ENCODE measurements at regions of chrX and their contacts with region 1.

Region 1: GRCh38 chrX:118254611-118255010 is 91.3 kb upstream of the WDR44 start:
- DNase-seq: peak; percentile 39
- ATAC-seq: no peak
- H3K4me3 ChIP-seq: no peak overlapping the region
- H3K27ac ChIP-seq: no peak overlapping the region
- H3K4me1 ChIP-seq: no peaks in the 10 kb centered on the region
- H3K27me3 ChIP-seq: no peaks in the 10 kb centered on the region
- CTCF ChIP-seq: peak; percentile 73; the same call in 1 of the 2 replicates

Region 2: GRCh38 chrX:116490104-116490503 is 1764.5 kb before region 1 on chrX:
- CTCF ChIA-PET with region 1: no interaction called
- POLR2A ChIA-PET with region 1: no interaction called
- in situ Hi-C with region 1: no loop called
- intact Hi-C with region 1: loop called (anchors 10 kb)
- DNase-seq: no peak
- ATAC-seq: no peak
- H3K4me3 ChIP-seq: no peak overlapping the region
- H3K27ac ChIP-seq: no peak overlapping the region
- H3K4me1 ChIP-seq: no peaks in the 10 kb centered on the region
- H3K27me3 ChIP-seq: no peaks in the 10 kb centered on the region
- CTCF ChIP-seq: peak; percentile 30; the same call in 1 of the 2 replicates

Region 3: GRCh38 chrX:117713411-117713810 is 541.2 kb before region 1 on chrX:
- CTCF ChIA-PET with region 1: no interaction called
- POLR2A ChIA-PET with region 1: interaction called, 12 read pairs
- in situ Hi-C with region 1: no loop called
- intact Hi-C with region 1: no loop called
- DNase-seq: no peak
- ATAC-seq: no peak
- H3K4me3 ChIP-seq: no peak overlapping the region
- H3K27ac ChIP-seq: no peak overlapping the region
- H3K4me1 ChIP-seq: no peaks in the 10 kb centered on the region
- H3K27me3 ChIP-seq: no peaks in the 10 kb centered on the region
- CTCF ChIP-seq: no peak

Region 4: DNA sequence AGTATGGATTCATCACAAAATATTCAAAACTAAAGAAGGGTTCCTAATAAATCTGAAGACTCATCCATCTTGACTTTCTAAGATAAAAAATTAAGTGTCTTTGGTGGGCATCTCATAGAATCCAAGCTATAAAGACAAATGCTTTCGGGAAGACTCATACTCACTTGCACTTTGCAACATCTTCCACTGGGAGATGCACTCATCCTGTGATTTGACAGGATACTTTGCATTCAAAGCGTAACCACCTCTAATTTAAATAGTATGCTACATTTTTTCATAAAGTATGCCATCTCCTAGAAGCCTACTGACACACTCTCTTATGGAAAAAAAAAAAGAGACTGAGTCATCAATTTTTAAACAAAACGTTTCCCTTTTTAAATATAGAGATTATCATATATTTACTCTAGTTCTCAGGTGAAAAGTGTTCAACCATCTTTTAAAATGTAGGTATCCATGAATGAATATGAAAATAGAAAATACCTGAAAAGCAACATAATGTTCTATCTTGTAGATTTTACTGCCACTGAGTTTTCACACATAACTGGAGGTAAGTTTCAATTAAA is 257.6 kb before region 1 on chrX:
- CTCF ChIA-PET with region 1: no interaction called
- POLR2A ChIA-PET with region 1: interaction called, 4 read pairs
- in situ Hi-C with region 1: no loop called
- intact Hi-C with region 1: loop called (anchors 10 kb)
- DNase-seq: no peak
- ATAC-seq: no peak
- H3K4me3 ChIP-seq: no peak overlapping the region
- H3K27ac ChIP-seq: no peak overlapping the region
- H3K4me1 ChIP-seq: no peaks in the 10 kb centered on the region
- H3K27me3 ChIP-seq: no peaks in the 10 kb centered on the region
- CTCF ChIP-seq: peak; percentile 58; the same call in 1 of the 2 replicates

Region 5: DNA sequence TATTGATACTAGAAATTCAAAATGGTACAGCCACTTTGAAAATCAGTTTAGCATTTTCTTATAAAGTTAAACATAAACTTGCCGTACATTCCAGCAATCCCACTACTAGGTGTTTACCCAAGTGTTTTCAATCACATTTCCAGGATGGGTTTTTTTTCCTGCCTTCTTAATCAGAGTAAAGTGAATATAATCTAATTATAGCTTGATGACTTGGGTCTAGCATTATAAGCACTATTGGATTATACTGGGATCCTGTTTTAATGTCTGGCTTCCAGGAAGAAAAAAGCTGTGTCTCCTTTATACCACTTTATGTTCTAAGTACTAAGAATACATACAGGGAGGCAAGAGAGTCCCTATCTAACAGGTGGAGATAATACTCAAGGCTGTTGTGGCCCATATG is 34.7 kb before region 1 on chrX:
- CTCF ChIA-PET with region 1: no interaction called
- POLR2A ChIA-PET with region 1: no interaction called
- in situ Hi-C with region 1: no loop called
- intact Hi-C with region 1: no loop called
- DNase-seq: no peak
- ATAC-seq: no peak
- H3K4me3 ChIP-seq: no peak overlapping the region
- H3K27ac ChIP-seq: no peak overlapping the region
- H3K4me1 ChIP-seq: no peaks in the 10 kb centered on the region
- H3K27me3 ChIP-seq: no peaks in the 10 kb centered on the region
- CTCF ChIP-seq: no peak